PC-9 (cell line): ENCODE measurements at regions of chr1 and their contacts with region 1.

Region 1: DNA sequence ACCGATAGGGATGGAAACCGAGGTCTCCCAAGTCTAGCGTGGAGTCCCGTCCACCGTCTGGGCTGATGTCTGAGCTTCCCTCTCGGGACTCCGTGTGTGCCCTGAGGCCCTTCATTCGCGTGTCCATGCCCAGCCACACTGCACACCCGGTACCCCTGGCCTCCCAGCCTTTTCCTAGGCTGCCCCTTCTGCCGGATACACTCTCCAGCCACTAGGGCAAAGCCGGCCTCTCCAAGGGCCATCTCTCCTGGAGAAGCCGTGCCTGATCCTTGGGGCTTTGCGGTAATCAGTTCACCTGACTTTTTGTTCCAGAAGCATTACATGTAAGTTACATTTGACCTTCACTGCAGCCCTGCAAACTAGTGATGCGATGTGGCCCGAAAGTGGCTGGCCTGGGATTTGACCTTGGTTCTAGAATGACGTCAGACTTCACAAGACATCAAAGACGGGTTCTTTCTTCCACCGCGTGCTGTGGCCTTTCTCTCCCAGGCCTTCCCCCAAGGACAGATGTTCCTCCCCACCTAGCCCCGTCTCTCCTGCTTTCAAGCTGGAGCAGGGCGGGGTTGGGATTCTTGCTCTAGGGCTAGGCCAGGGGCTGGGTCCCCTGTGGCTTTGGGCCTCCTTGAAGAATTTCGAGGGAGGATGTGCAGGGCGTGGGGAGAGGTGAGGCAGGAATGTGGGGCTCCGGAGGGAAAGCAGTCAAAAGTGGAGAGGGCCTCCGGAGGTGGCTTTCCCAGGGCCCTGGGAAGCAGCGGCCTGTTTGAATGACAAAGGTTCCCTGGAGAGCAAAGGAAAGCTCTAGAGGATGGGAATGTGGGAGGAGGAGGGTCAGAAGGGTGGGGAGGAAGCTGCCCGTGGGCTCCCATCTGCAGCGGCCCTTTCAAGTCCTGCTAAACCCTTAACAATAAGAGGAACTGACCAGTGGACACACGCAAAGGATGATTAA is 49.7 kb upstream of the SLC2A1 start:
- DNase-seq: peak in 1 of 2 experiments; percentile 74
- H3K4me3 ChIP-seq: no peak overlapping the region
- H3K27ac ChIP-seq: no peak overlapping the region
- H3K4me1 ChIP-seq: peaks cover 22% of the 10 kb centered on the region
- H3K27me3 ChIP-seq: no peaks in the 10 kb centered on the region
- CTCF ChIP-seq: no peak

Region 2: DNA sequence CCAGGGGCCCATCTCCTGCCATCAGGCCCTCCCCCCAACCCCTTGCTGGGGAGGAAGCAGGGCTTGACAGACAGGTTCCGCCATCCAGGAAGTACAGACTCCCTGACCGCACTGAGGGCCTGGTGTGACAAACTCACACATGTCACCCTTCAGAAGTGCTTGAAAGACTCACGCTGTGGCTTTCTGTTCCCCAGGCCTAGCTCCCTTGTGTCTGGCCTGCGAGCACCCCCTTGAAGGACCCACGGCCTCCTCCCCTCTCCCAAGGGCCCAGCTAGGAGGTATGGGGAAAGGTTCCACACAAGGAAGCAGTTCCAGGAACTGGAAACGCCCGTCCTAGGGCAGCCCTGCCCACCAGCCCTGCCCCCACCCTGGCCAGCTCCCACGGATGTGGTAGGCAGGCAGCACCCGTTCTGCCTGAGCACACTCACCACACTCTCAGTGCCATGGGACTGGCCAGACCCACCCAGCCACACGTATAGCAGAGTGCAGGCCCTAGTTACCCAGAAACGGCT is 76.4 kb before region 1 on chr1:
- CTCF ChIA-PET with region 1: interaction called, 3 read pairs
- POLR2A ChIA-PET with region 1: interaction called, 15 read pairs
- intact Hi-C with region 1: no loop called
- DNase-seq: peak; percentile 86 to 92
- H3K4me3 ChIP-seq: no peak overlapping the region
- H3K27ac ChIP-seq: peak overlapping the region; percentile 69
- H3K4me1 ChIP-seq: peaks cover 60% of the 10 kb centered on the region
- H3K27me3 ChIP-seq: no peaks in the 10 kb centered on the region
- CTCF ChIP-seq: no peak

Region 3: GRCh38 chr1:43671626-43672330 is 663.4 kb after region 1 on chr1:
- CTCF ChIA-PET with region 1: no interaction called
- POLR2A ChIA-PET with region 1: no interaction called
- intact Hi-C with region 1: no loop called
- DNase-seq: no peak
- H3K4me3 ChIP-seq: no peak overlapping the region
- H3K27ac ChIP-seq: no peak overlapping the region
- H3K4me1 ChIP-seq: no peaks in the 10 kb centered on the region
- H3K27me3 ChIP-seq: no peaks in the 10 kb centered on the region
- CTCF ChIP-seq: no peak